ENCODE measurements at regions of chr2 and their contacts with region 1.

Region 1: DNA sequence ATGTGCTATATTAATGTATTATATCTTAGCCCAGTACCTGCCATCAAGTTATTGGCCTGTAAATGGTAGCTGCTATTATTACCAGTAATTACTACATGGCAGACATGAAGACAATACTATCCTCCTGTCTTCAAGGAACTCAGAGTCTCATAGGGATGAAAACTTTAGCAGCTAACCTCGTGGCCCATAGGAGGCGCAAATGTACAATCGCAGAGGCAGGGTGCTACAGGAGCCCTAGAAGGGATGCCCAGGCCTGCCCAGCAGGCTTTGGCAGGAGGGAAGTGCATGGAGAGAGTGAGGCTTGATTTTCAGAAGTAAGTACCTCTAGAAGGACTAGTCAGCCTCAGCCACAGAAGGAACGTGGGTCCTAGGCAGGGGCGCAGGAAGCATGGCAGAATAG is 44.7 kb upstream of the KIDINS220 start:
- DNase-seq: peak; percentile 50 to 79
- H3K4me3 ChIP-seq: no peak overlapping the region
- H3K27ac ChIP-seq: no peak overlapping the region
- H3K4me1 ChIP-seq: no peaks in the 10 kb centered on the region; a peak in 3 of 7 replicates
- H3K27me3 ChIP-seq: no peaks in the 10 kb centered on the region
- CTCF ChIP-seq: peak; percentile 71 to 93 (median 90)
- EP300 ChIP-seq: no peak
- POLR2A ChIP-seq: no peak
- RAD21 ChIP-seq: peak; percentile 92 to 95

Region 2: GRCh38 chr2:8862230-8862629 is 19.9 kb before region 1 on chr2:
- CTCF ChIA-PET with region 1: interaction called, 23 read pairs
- POLR2A ChIA-PET with region 1: no interaction called
- DNase-seq: no peak
- H3K4me3 ChIP-seq: no peak overlapping the region
- H3K27ac ChIP-seq: no peak overlapping the region
- H3K4me1 ChIP-seq: no peaks in the 10 kb centered on the region
- H3K27me3 ChIP-seq: no peaks in the 10 kb centered on the region
- CTCF ChIP-seq: no peak
- EP300 ChIP-seq: no peak
- POLR2A ChIP-seq: no peak
- RAD21 ChIP-seq: no peak

Region 3: DNA sequence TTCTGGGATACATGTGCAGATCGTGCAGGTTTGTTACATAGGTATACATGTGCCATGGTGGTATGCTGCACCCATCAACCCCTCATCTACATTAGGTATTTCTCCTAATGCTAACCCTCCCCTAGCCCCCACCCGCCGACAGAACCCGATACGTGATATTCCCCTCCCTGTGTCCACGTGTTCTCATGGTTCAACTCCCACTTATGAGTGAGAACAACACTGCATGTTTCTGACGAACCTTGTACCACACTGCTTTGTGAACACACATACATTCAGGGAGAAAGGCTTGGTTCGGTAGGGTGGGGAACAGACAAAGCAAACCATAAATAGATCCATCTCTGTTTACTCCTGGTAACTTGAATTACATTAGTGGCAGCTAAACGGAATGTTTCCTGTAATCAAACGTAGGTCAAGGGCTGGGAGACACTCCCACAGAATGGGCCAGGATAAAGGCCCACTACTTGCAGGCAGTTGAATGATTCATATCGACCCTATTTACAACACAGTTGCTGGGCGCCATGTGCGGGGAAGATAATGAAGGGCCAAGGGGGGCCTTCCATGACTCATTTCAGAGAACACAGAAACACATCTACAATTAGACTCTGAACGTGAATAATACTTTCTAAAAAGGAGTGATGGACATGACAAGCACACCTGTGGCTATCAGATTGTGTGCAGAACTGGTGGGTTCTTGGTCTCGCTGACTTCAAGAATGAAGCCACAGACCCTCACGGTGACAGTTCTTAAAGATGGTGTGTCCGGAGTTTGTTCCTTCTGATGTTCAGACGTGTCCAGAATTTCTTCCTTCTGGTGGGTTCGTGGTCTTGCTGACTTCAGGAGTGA is 12.1 kb after region 1 on chr2:
- CTCF ChIA-PET with region 1: interaction called, 13 read pairs
- POLR2A ChIA-PET with region 1: no interaction called
- DNase-seq: no peak
- H3K4me3 ChIP-seq: no peak overlapping the region
- H3K27ac ChIP-seq: no peak overlapping the region
- H3K4me1 ChIP-seq: peaks cover 0 to 8% (median 4%) of the 10 kb centered on the region in 4 experiments; a peak in 3 of 7 replicates
- H3K27me3 ChIP-seq: no peaks in the 10 kb centered on the region
- CTCF ChIP-seq: no peak
- EP300 ChIP-seq: no peak
- POLR2A ChIP-seq: no peak
- RAD21 ChIP-seq: no peak

Region 4: GRCh38 chr2:8906208-8906607 is 24.1 kb after region 1 on chr2:
- CTCF ChIA-PET with region 1: interaction called, 10 read pairs
- POLR2A ChIA-PET with region 1: no interaction called
- DNase-seq: no peak
- H3K4me3 ChIP-seq: no peak overlapping the region
- H3K27ac ChIP-seq: no peak overlapping the region
- H3K4me1 ChIP-seq: no peaks in the 10 kb centered on the region
- H3K27me3 ChIP-seq: no peaks in the 10 kb centered on the region
- CTCF ChIP-seq: no peak
- EP300 ChIP-seq: no peak
- POLR2A ChIP-seq: no peak
- RAD21 ChIP-seq: no peak

Region 5: GRCh38 chr2:8986327-8986976 is 104.4 kb after region 1 on chr2:
- CTCF ChIA-PET with region 1: interaction called, 37 read pairs
- POLR2A ChIA-PET with region 1: no interaction called
- DNase-seq: peak in 1 of 2 experiments; percentile 71
- H3K4me3 ChIP-seq: no peak overlapping the region
- H3K27ac ChIP-seq: no peak overlapping the region
- H3K4me1 ChIP-seq: peaks cover 0 to 4% (median 1%) of the 10 kb centered on the region in 4 experiments; a peak in 1 of 7 replicates
- H3K27me3 ChIP-seq: no peaks in the 10 kb centered on the region
- CTCF ChIP-seq: peak; percentile 74 to 80 (median 77)
- EP300 ChIP-seq: no peak
- POLR2A ChIP-seq: no peak
- RAD21 ChIP-seq: peak; percentile 76 to 85

Region 6: GRCh38 chr2:9095690-9096351 is 213.7 kb after region 1 on chr2:
- CTCF ChIA-PET with region 1: interaction called, 12 read pairs
- POLR2A ChIA-PET with region 1: no interaction called
- DNase-seq: peak in 1 of 2 experiments; percentile 71
- H3K4me3 ChIP-seq: peak overlapping the region in 1 of 4 experiments; percentile 45; a peak in 2 of 8 replicates
- H3K27ac ChIP-seq: no peak overlapping the region
- H3K4me1 ChIP-seq: peaks cover 0 to 12% (median 9%) of the 10 kb centered on the region in 4 experiments; a peak in 6 of 7 replicates
- H3K27me3 ChIP-seq: peaks cover 0 to 8% (median 3%) of the 10 kb centered on the region in 4 experiments; a peak in 3 of 7 replicates
- CTCF ChIP-seq: peak; percentile 20 to 38 (median 28); a peak in 3 of 4 replicates
- EP300 ChIP-seq: no peak
- POLR2A ChIP-seq: no peak
- RAD21 ChIP-seq: peak; percentile 50 to 56

Region 7: GRCh38 chr2:9112079-9112721 is 230.1 kb after region 1 on chr2:
- CTCF ChIA-PET with region 1: interaction called, 39 read pairs
- POLR2A ChIA-PET with region 1: no interaction called
- DNase-seq: no peak
- H3K4me3 ChIP-seq: no peak overlapping the region
- H3K27ac ChIP-seq: no peak overlapping the region
- H3K4me1 ChIP-seq: peaks cover 0 to 5% (median under 1%) of the 10 kb centered on the region in 4 experiments; a peak in 2 of 7 replicates
- H3K27me3 ChIP-seq: no peaks in the 10 kb centered on the region; a peak in 1 of 7 replicates
- CTCF ChIP-seq: no peak
- EP300 ChIP-seq: no peak
- POLR2A ChIP-seq: no peak
- RAD21 ChIP-seq: no peak